Stomach (tissue), 19 donors: ENCODE measurements at regions of chr2 and their contacts with region 1.

Region 1: DNA sequence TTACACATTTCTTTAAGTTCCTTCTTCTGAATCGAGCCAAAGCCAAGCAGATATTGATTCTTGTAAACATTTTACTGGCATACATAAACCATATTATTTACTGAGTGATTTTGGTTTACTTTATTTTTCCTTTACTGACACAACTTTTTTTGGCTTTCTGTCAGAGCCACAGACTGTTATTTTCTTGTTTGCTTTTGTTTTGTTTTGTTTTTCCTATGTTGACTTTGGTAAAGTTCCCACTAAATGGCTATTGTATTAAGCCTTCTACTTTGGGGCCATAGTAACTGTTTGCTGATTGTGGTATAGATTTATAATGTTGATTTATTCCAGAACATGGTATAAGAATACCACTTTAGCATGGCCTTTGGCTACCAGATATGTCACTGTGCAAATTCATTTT is 419.4 kb downstream of the DCDC2C start:
- DNase-seq: no peak
- H3K4me3 ChIP-seq: no peak overlapping the region
- H3K27ac ChIP-seq: no peak overlapping the region
- H3K4me1 ChIP-seq: no peaks in the 10 kb centered on the region
- H3K27me3 ChIP-seq: no peaks in the 10 kb centered on the region
- CTCF ChIP-seq: no peak
- EP300 ChIP-seq: no peak
- POLR2A ChIP-seq: no peak

Region 2: GRCh38 chr2:4279431-4279830 is 156.7 kb after region 1 on chr2:
- intact Hi-C with region 1: no loop called
- DNase-seq: no peak
- H3K4me3 ChIP-seq: no peak overlapping the region
- H3K27ac ChIP-seq: no peak overlapping the region
- H3K4me1 ChIP-seq: no peaks in the 10 kb centered on the region
- H3K27me3 ChIP-seq: no peaks in the 10 kb centered on the region
- CTCF ChIP-seq: no peak
- EP300 ChIP-seq: no peak
- POLR2A ChIP-seq: no peak

Region 3: GRCh38 chr2:4340536-4340935 is 217.8 kb after region 1 on chr2:
- intact Hi-C with region 1: loop called (anchors 10 kb)
- DNase-seq: no peak
- H3K4me3 ChIP-seq: no peak overlapping the region
- H3K27ac ChIP-seq: no peak overlapping the region
- H3K4me1 ChIP-seq: no peaks in the 10 kb centered on the region
- H3K27me3 ChIP-seq: no peaks in the 10 kb centered on the region
- CTCF ChIP-seq: no peak
- EP300 ChIP-seq: no peak
- POLR2A ChIP-seq: no peak